WTC11 (cell line): ENCODE measurements at regions of chr5 and their contacts with region 1.

Region 1: DNA sequence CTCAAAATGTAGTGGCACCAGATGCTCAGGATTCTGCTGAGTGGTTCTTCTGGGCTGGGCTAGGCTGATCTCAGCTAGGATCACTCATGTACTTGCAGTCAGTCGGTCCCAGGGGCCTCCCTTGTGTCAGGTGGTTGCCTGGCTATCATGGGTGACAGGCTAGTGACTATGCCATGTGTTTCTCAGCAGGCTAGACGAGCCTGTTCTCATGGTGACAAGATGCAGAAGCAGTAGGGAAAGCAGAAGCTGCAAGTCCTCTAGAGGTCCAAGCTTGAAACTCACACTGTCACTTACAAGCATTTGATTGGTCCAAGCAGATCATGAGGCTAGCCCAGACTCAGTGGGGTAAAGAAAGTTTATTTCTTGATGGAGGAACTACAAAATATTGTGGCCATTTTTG is 15.2 kb upstream of the KCNMB1 start:
- DNase-seq: no peak
- ATAC-seq: no peak
- H3K4me3 Mint-ChIP-seq: no peak overlapping the region
- H3K27ac Mint-ChIP-seq: no peak overlapping the region
- H3K4me1 Mint-ChIP-seq: peaks cover 60% of the 10 kb centered on the region
- H3K27me3 Mint-ChIP-seq: 0 out of 2 replicates have a peak, but pooled peaks cover 3% of the 10 kb centered on the region
- CTCF ChIP-seq: no peak

Region 2: DNA sequence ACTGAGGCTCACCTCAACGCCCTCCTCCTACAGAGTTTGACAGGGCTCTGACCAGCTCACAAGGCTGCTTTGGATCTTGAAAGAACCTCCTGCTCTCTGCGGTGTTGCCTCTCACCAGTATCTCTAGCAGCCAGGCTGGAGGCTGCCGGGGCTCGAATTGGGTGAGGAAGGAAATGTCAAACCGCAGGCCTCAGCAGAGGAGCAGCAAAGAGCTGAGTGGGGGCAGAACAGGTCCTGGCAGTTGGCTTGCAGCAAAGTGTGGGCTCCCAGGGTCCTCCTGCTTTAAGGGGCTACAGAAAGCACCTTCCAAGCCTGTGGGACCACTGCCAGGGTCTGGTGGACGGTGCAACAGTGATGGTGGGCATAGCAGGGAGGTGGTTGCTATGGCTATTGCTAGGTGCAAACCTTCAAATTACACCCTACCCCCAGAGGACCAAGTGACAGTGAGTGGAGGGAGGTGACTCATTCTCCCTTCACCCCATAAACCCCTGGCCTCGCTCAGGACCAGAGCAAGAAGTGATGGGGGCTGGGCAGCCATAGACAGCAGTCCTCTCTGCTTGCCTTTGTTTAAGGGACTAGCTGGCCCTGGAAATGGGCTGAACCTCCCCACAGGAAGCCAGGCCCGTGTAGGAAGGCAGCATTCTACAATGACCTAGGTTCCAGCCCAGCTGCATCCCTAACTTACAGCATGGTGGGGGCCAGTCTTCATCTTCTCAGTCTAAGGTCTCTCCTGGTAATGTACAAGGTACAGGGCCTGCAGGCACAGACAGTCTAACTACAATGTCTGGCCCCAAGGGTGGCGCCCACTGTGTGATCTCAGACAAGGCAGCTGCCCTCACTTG is 125.6 kb before region 1 on chr5:
- CTCF ChIA-PET with region 1: interaction called, 48 read pairs
- POLR2A ChIA-PET with region 1: interaction called, 3 read pairs
- DNase-seq: peak; percentile 26
- ATAC-seq: peak; percentile 8
- H3K4me3 Mint-ChIP-seq: no peak overlapping the region
- H3K27ac Mint-ChIP-seq: 0 out of 2 replicates have a peak overlapping the region, but pooled peaks have one; percentile 9
- H3K4me1 Mint-ChIP-seq: peaks cover 54% of the 10 kb centered on the region
- H3K27me3 Mint-ChIP-seq: peaks cover 27% of the 10 kb centered on the region
- CTCF ChIP-seq: no peak

Region 3: GRCh38 chr5:170338933-170339779 is 65.2 kb before region 1 on chr5:
- CTCF ChIA-PET with region 1: interaction called, 33 read pairs
- POLR2A ChIA-PET with region 1: no interaction called
- DNase-seq: peak; percentile 64
- ATAC-seq: peak; percentile 84
- H3K4me3 Mint-ChIP-seq: no peak overlapping the region
- H3K27ac Mint-ChIP-seq: no peak overlapping the region
- H3K4me1 Mint-ChIP-seq: peaks cover 58% of the 10 kb centered on the region
- H3K27me3 Mint-ChIP-seq: no peaks in the 10 kb centered on the region; the same call in none of the 2 replicates
- CTCF ChIP-seq: peak; percentile 63

Region 4: GRCh38 chr5:170357955-170358444 is 46.4 kb before region 1 on chr5:
- CTCF ChIA-PET with region 1: interaction called, 24 read pairs
- POLR2A ChIA-PET with region 1: no interaction called
- DNase-seq: no peak
- ATAC-seq: no peak
- H3K4me3 Mint-ChIP-seq: no peak overlapping the region
- H3K27ac Mint-ChIP-seq: no peak overlapping the region
- H3K4me1 Mint-ChIP-seq: peaks cover 60% of the 10 kb centered on the region
- H3K27me3 Mint-ChIP-seq: no peaks in the 10 kb centered on the region
- CTCF ChIP-seq: no peak

Region 5: GRCh38 chr5:170420780-170421412 is 16.5 kb after region 1 on chr5:
- CTCF ChIA-PET with region 1: interaction called, 28 read pairs
- POLR2A ChIA-PET with region 1: no interaction called
- DNase-seq: peak; percentile 73
- ATAC-seq: peak; percentile 94
- H3K4me3 Mint-ChIP-seq: no peak overlapping the region
- H3K27ac Mint-ChIP-seq: no peak overlapping the region
- H3K4me1 Mint-ChIP-seq: peaks cover 21% of the 10 kb centered on the region
- H3K27me3 Mint-ChIP-seq: no peaks in the 10 kb centered on the region
- CTCF ChIP-seq: peak; percentile 63

Region 6: GRCh38 chr5:170791325-170791954 is 387.0 kb after region 1 on chr5:
- CTCF ChIA-PET with region 1: no interaction called
- POLR2A ChIA-PET with region 1: no interaction called
- DNase-seq: peak; percentile 84
- ATAC-seq: peak; percentile 90
- H3K4me3 Mint-ChIP-seq: no peak overlapping the region
- H3K27ac Mint-ChIP-seq: no peak overlapping the region; the same call in 1 of the 2 replicates
- H3K4me1 Mint-ChIP-seq: peaks cover 36% of the 10 kb centered on the region
- H3K27me3 Mint-ChIP-seq: peaks cover 6% of the 10 kb centered on the region; the same call in 1 of the 2 replicates
- CTCF ChIP-seq: peak; percentile 32